Activated T-helper 1 cell treated with anti-CD3 and anti-CD28 coated beads, Interleukin-12 subunit alpha, Interleukin-12 subunit beta, Interleukin-2, Interleukin-4 antibody, amounts not matched to agents 30 ng/mL and 10 ng/mL and 1 ng/mL, durations not matched to agents 14 hours and 24 hours and 36 hours (primary cell): ENCODE measurements at regions of chr9 and their contacts with region 1.

Region 1: GRCh38 chr9:21031091-21031807 is at the start of gene HACD4:
- DNase-seq: peak; percentile 67
- H3K4me3 Mint-ChIP-seq: peak within 1 kb of the TSS; percentile 63
- H3K27ac Mint-ChIP-seq: peak within 1 kb of the TSS; percentile 27
- H3K4me1 Mint-ChIP-seq: peaks cover 23% of the 10 kb centered on the region
- H3K27me3 Mint-ChIP-seq: no peaks in the 10 kb centered on the region
- total RNA-seq, gene HACD4: 2.7 and 3.0 TPM in 2 replicates

Region 2: GRCh38 chr9:19471737-19472648 is 1559.3 kb before region 1 on chr9:
- intact Hi-C with region 1: loop called (anchors 5 kb)
- DNase-seq: no peak
- H3K4me3 Mint-ChIP-seq: no peak overlapping the region
- H3K27ac Mint-ChIP-seq: peak overlapping the region; percentile 4
- H3K4me1 Mint-ChIP-seq: peaks cover 19% of the 10 kb centered on the region
- H3K27me3 Mint-ChIP-seq: peaks cover 15% of the 10 kb centered on the region

Region 3: GRCh38 chr9:20558566-20559016 is 472.7 kb before region 1 on chr9:
- intact Hi-C with region 1: loop called (anchors 10 kb)
- DNase-seq: peak; percentile 18
- H3K4me3 Mint-ChIP-seq: peak overlapping the region; percentile 20
- H3K27ac Mint-ChIP-seq: peak overlapping the region; percentile 47
- H3K4me1 Mint-ChIP-seq: peaks cover 83% of the 10 kb centered on the region
- H3K27me3 Mint-ChIP-seq: no peaks in the 10 kb centered on the region

Region 4: DNA sequence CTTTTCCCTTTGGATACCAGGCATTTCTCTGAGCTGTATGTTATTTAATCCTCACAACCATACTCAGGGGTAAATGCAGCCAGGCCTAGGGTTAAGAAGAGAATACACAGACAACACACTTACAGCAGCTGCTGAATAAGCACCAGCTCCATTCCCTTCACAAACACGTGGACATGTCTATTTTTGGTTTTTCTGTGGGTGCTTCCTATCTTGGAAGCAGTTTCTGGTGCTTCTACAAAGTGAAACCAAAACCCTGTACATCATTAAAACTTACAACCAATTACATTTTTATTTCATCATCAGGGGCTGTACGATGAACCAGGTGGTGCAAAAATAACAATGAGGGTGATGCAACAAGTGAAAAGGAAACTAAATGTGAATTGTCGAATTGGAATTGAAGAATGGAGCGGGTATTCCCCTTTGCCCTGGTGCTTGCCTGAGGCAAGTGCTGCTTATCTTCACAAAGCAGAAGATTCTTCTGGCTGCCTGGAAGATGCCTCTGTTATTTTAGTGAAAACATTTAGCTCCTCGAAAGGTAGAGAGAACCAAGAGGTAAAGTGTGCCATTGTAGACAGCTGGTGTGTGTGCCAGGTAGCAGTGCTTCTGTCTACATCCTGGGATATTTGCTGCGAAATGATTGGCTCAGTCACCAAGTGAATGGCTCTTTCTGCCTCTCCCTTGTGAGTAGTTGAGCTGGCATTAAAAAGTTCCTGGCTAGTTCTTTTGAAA is 65.1 kb after region 1 on chr9:
- intact Hi-C with region 1: loop called (anchors 1 kb)
- DNase-seq: peak; percentile 38
- H3K4me3 Mint-ChIP-seq: peak overlapping the region; percentile 54
- H3K27ac Mint-ChIP-seq: peak overlapping the region; percentile 56
- H3K4me1 Mint-ChIP-seq: peaks cover 35% of the 10 kb centered on the region
- H3K27me3 Mint-ChIP-seq: no peaks in the 10 kb centered on the region

Region 5: DNA sequence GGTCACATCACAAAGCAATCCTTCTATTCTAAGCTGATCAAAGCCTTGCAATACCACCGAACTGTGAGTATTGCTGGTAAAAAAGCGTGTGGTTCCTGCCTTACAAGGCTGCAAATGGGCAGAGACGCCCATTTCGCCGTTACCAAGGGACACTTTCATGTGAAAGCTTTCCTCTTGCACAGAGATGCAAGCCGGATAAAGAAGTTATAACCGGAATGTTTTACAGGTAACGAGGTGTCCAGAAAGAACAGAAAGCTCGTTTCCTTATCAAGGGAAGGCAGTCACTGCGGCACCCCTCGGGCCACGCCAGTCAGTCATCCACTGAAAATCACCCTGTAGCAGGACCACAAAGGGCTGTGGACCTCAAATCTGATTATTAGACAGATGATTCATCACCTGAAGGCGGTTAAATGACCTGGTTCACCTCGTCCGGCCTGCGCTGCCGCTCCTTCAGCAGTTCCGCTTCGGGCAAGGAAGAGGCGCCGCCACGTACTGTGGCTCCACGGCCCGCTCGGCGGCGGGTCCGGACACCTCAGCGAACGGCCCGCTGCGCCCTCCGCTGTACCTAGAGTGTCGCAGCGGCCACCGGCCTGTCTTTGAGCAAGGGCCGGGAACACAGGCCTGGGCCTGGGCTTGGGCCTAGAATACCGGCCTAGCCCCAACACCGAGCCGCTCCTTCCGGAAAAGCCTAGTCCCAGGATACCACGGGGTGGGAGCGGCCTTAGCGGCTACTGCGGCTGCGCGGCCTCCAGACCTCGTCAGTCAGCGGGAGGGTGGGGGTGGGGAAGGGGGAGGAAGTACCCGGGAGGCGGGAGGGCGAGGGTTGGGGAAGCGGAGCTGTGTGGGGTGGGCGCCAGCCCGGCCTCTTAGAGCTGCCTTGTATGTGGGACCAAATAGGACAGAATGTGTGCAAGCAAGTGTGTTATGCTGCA is 303.7 kb after region 1 on chr9 and contains the start of gene KLHL9:
- intact Hi-C with region 1: loop called (anchors 10 kb)
- DNase-seq: peak; percentile 75
- H3K4me3 Mint-ChIP-seq: peak within 1 kb of the TSS; percentile 92
- H3K27ac Mint-ChIP-seq: peak within 1 kb of the TSS; percentile 85
- H3K4me1 Mint-ChIP-seq: peaks cover 32% of the 10 kb centered on the region
- H3K27me3 Mint-ChIP-seq: peaks cover 13% of the 10 kb centered on the region
- total RNA-seq, gene KLHL9: 14.1 and 15.6 TPM in 2 replicates